Activated CD4-positive, alpha-beta T cell treated with anti-CD3 and anti-CD28 coated beads for 36 hours (primary cell): ENCODE measurements at regions of chr19 and their contacts with region 1.

Region 1: GRCh38 chr19:54630782-54631181 is 498 bp downstream of the LILRB1 start:
- DNase-seq: no peak
- ATAC-seq: no peak
- H3K4me3 Mint-ChIP-seq: no peak overlapping the region
- H3K27ac Mint-ChIP-seq: no peak overlapping the region
- H3K4me1 Mint-ChIP-seq: no peaks in the 10 kb centered on the region
- H3K27me3 Mint-ChIP-seq: peaks cover 17% of the 10 kb centered on the region

Region 2: GRCh38 chr19:53892981-53893325 is 737.8 kb before region 1 on chr19:
- CTCF ChIA-PET with region 1: no interaction called
- POLR2A ChIA-PET with region 1: no interaction called
- intact Hi-C with region 1: no loop called
- DNase-seq: no peak
- ATAC-seq: no peak
- H3K4me3 Mint-ChIP-seq: no peak overlapping the region
- H3K27ac Mint-ChIP-seq: no peak overlapping the region
- H3K4me1 Mint-ChIP-seq: peaks cover 5% of the 10 kb centered on the region
- H3K27me3 Mint-ChIP-seq: peaks cover 27% of the 10 kb centered on the region

Region 3: GRCh38 chr19:54281007-54281728 is 349.6 kb before region 1 on chr19 and contains the start of gene LILRB2:
- CTCF ChIA-PET with region 1: no interaction called
- POLR2A ChIA-PET with region 1: no interaction called
- intact Hi-C with region 1: loop called in 1 of 2 experiments (anchors 5 kb)
- DNase-seq: no peak
- ATAC-seq: no peak
- H3K4me3 Mint-ChIP-seq: no peak within 1 kb of the TSS
- H3K27ac Mint-ChIP-seq: no peak within 1 kb of the TSS
- H3K4me1 Mint-ChIP-seq: no peaks in the 10 kb centered on the region
- H3K27me3 Mint-ChIP-seq: peaks cover 39% of the 10 kb centered on the region
- total RNA-seq, gene LILRB2: not detected

Region 4: DNA sequence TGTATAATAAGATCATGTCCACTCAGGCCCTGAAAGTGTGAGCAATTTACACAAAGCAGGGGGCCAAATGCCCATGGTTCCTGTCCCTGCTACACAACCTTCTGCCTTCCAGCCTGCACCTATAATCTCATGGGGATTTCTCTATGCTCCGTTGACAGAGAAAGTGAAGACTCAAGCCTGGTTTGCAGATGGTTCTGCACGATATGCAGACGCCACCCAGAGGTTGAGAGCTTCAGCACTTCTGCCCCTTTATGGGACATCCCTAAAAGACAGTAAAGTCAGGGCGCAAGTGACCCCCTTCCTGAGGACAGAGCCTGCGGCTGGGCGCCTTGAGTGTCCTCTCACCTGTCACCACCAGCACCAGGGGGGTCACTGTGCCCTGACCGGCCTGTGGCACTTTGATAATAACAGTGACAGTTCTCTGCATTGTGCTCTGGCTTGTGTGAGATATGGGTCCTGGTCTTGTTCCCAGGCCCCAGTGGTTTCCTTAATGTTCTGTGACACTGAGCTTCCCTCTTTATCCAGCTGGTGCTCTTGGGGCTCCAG is 332.9 kb before region 1 on chr19:
- CTCF ChIA-PET with region 1: no interaction called
- POLR2A ChIA-PET with region 1: no interaction called
- intact Hi-C with region 1: loop called in 1 of 2 experiments (anchors 5 kb)
- DNase-seq: no peak
- ATAC-seq: no peak
- H3K4me3 Mint-ChIP-seq: no peak overlapping the region
- H3K27ac Mint-ChIP-seq: no peak overlapping the region
- H3K4me1 Mint-ChIP-seq: no peaks in the 10 kb centered on the region
- H3K27me3 Mint-ChIP-seq: peaks cover 6% of the 10 kb centered on the region

Region 5: GRCh38 chr19:54462655-54463530 is 167.9 kb before region 1 on chr19:
- CTCF ChIA-PET with region 1: no interaction called
- POLR2A ChIA-PET with region 1: no interaction called
- intact Hi-C with region 1: no loop called
- DNase-seq: peak; percentile 81
- ATAC-seq: peak; percentile 11
- H3K4me3 Mint-ChIP-seq: peak overlapping the region; percentile 80
- H3K27ac Mint-ChIP-seq: peak overlapping the region; percentile 91
- H3K4me1 Mint-ChIP-seq: peaks cover 32% of the 10 kb centered on the region
- H3K27me3 Mint-ChIP-seq: peaks cover 3% of the 10 kb centered on the region